Mammary epithelial cell (primary cell): ENCODE measurements at regions of chr3 and their contacts with region 1.

Region 1: GRCh38 chr3:128133273-128134084 is 9.9 kb upstream of the RUVBL1 start:
- DNase-seq: peak; percentile 39
- H3K4me3 ChIP-seq: no peak overlapping the region
- H3K27ac ChIP-seq: no peak overlapping the region
- H3K4me1 ChIP-seq: no peaks in the 10 kb centered on the region
- H3K27me3 ChIP-seq: no peaks in the 10 kb centered on the region
- CTCF ChIP-seq: peak; percentile 41 to 66

Region 2: DNA sequence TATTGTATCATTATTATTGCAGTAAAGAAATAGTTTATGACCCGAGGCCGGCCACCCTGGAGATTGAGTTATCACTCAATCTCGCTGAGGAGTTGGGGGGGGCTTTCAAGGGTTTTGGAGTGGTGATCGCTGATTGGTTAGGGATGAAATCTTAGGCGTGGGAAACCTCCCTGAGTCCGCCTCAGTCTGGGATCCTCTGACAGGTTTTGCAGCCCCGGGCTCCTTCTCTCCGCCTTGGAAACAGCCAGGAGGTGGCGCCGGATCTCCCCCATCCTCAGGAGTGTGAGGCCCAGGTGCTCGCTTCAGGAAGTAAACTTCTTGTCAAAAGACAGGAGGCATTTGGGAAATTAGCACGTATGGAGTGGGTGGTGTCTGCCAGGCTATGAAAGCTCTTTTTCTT is 122.3 kb before region 1 on chr3:
- CTCF ChIA-PET with region 1: no interaction called
- dilution Hi-C with region 1: no loop called
- in situ Hi-C with region 1: no loop called
- intact Hi-C with region 1: loop called (anchors 2 kb)
- DNase-seq: peak; percentile 46
- H3K4me3 ChIP-seq: no peak overlapping the region
- H3K27ac ChIP-seq: no peak overlapping the region
- H3K4me1 ChIP-seq: peaks cover 13% of the 10 kb centered on the region
- H3K27me3 ChIP-seq: no peaks in the 10 kb centered on the region
- CTCF ChIP-seq: peak; percentile 29 to 68

Region 3: GRCh38 chr3:128064962-128065361 is 68.5 kb before region 1 on chr3:
- CTCF ChIA-PET with region 1: no interaction called
- dilution Hi-C with region 1: no loop called
- in situ Hi-C with region 1: no loop called
- intact Hi-C with region 1: no loop called
- DNase-seq: no peak
- H3K4me3 ChIP-seq: no peak overlapping the region
- H3K27ac ChIP-seq: no peak overlapping the region
- H3K4me1 ChIP-seq: peaks cover 22% of the 10 kb centered on the region
- H3K27me3 ChIP-seq: no peaks in the 10 kb centered on the region
- CTCF ChIP-seq: no peak

Region 4: GRCh38 chr3:128075516-128076482 is 57.7 kb before region 1 on chr3:
- CTCF ChIA-PET with region 1: no interaction called
- dilution Hi-C with region 1: no loop called
- in situ Hi-C with region 1: no loop called
- intact Hi-C with region 1: loop called (anchors 1 kb)
- DNase-seq: peak; percentile 70
- H3K4me3 ChIP-seq: peak overlapping the region in 2 of 3 experiments; percentile 17 to 49
- H3K27ac ChIP-seq: no peak overlapping the region
- H3K4me1 ChIP-seq: peaks cover 43% of the 10 kb centered on the region
- H3K27me3 ChIP-seq: no peaks in the 10 kb centered on the region
- CTCF ChIP-seq: peak; percentile 80 to 90

Region 5: GRCh38 chr3:128084391-128084963 is 49.0 kb before region 1 on chr3:
- CTCF ChIA-PET with region 1: interaction called, 10 read pairs
- dilution Hi-C with region 1: no loop called
- in situ Hi-C with region 1: no loop called
- intact Hi-C with region 1: no loop called
- DNase-seq: no peak
- H3K4me3 ChIP-seq: no peak overlapping the region
- H3K27ac ChIP-seq: no peak overlapping the region
- H3K4me1 ChIP-seq: peaks cover 25% of the 10 kb centered on the region
- H3K27me3 ChIP-seq: no peaks in the 10 kb centered on the region
- CTCF ChIP-seq: no peak

Region 6: GRCh38 chr3:128095222-128095703 is 38.2 kb before region 1 on chr3:
- CTCF ChIA-PET with region 1: interaction called, 3 read pairs
- dilution Hi-C with region 1: no loop called
- in situ Hi-C with region 1: no loop called
- intact Hi-C with region 1: loop called (anchors 1 kb)
- DNase-seq: peak; percentile 86
- H3K4me3 ChIP-seq: no peak overlapping the region
- H3K27ac ChIP-seq: no peak overlapping the region
- H3K4me1 ChIP-seq: peaks cover 21% of the 10 kb centered on the region
- H3K27me3 ChIP-seq: no peaks in the 10 kb centered on the region
- CTCF ChIP-seq: peak; percentile 90 to 98